GM10248 (cell line): ENCODE measurements at regions of chr5 and their contacts with region 1.

Region 1: GRCh38 chr5:285639-286557 is 14.5 kb downstream of the PDCD6 start:
- DNase-seq: no peak
- CTCF ChIP-seq: no peak

Region 2: GRCh38 chr5:195401-196160 is 90.3 kb before region 1 on chr5:
- CTCF ChIA-PET with region 1: no interaction called
- POLR2A ChIA-PET with region 1: no interaction called
- DNase-seq: no peak
- CTCF ChIP-seq: no peak

Region 3: GRCh38 chr5:270340-270739 is 15.6 kb before region 1 on chr5:
- CTCF ChIA-PET with region 1: interaction called, 11 read pairs
- POLR2A ChIA-PET with region 1: interaction called, 15 read pairs
- DNase-seq: no peak
- CTCF ChIP-seq: no peak

Region 4: DNA sequence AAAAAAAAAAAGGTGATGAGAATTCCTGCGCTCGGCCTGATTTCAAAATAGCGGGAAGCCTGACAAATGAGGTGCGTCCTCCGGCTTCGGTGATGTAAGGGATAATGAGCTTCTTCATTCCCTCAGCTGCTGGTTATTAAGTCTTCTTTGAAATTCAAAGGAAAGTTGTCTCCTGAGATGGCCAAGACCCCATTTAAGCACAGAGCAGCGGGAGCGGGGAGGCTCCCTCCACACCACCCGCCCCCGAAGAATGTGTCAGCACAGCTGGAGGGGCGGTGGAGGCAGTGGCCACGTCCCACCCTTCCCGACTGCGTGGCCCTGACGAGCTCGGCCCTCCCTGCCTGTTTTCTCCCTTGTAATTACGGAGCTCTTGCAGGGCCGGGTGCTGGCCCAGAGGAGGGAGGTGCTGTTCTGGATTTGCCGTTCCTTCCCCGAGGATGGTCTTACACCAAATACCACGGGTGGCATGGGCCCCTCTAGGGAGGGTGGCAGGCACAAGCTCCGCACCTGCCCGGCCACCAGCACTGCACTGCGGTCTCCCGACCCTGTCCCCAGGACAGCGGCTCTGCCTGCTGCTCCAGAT is 207.3 kb after region 1 on chr5:
- CTCF ChIA-PET with region 1: no interaction called
- POLR2A ChIA-PET with region 1: no interaction called
- DNase-seq: no peak
- CTCF ChIP-seq: no peak